GM12878 (cell line): ENCODE measurements at regions of chr1 and their contacts with region 1.

Region 1: GRCh38 chr1:157028674-157029073 is 16.9 kb downstream of the ARHGEF11 start:
- DNase-seq: no peak
- ATAC-seq: no peak
- H3K4me3 ChIP-seq: no peak overlapping the region
- H3K27ac ChIP-seq: no peak overlapping the region
- H3K4me1 ChIP-seq: no peaks in the 10 kb centered on the region
- H3K27me3 ChIP-seq: no peaks in the 10 kb centered on the region
- CTCF ChIP-seq: no peak
- EP300 ChIP-seq: no peak
- POLR2A ChIP-seq: no peak
- RAD21 ChIP-seq: no peak

Region 2: GRCh38 chr1:157040802-157041201 is 12.1 kb after region 1 on chr1:
- CTCF ChIA-PET with region 1: interaction called, 16 read pairs
- POLR2A ChIA-PET with region 1: interaction called, 3 read pairs
- RAD21 ChIA-PET with region 1: interaction called, 5 read pairs
- SMC1A ChIA-PET with region 1: interaction called, 9 read pairs
- in situ Hi-C with region 1: no loop called
- intact Hi-C with region 1: no loop called
- DNase-seq: no peak
- ATAC-seq: peak; percentile 36; the same call in 2 of the 3 replicates
- H3K4me3 ChIP-seq: no peak overlapping the region
- H3K27ac ChIP-seq: peak overlapping the region; percentile 22; the same call in 1 of the 2 replicates
- H3K4me1 ChIP-seq: no peaks in the 10 kb centered on the region
- H3K27me3 ChIP-seq: no peaks in the 10 kb centered on the region; a peak in 1 of 4 replicates
- CTCF ChIP-seq: no peak
- EP300 ChIP-seq: no peak
- POLR2A ChIP-seq: no peak
- RAD21 ChIP-seq: no peak

Region 3: GRCh38 chr1:157085421-157085820 is 56.7 kb after region 1 on chr1:
- CTCF ChIA-PET with region 1: no interaction called
- POLR2A ChIA-PET with region 1: no interaction called
- RAD21 ChIA-PET with region 1: no interaction called
- SMC1A ChIA-PET with region 1: no interaction called
- in situ Hi-C with region 1: no loop called
- intact Hi-C with region 1: no loop called
- DNase-seq: no peak
- ATAC-seq: no peak
- H3K4me3 ChIP-seq: no peak overlapping the region
- H3K27ac ChIP-seq: no peak overlapping the region
- H3K4me1 ChIP-seq: no peaks in the 10 kb centered on the region
- H3K27me3 ChIP-seq: no peaks in the 10 kb centered on the region
- CTCF ChIP-seq: no peak
- EP300 ChIP-seq: no peak
- POLR2A ChIP-seq: no peak
- RAD21 ChIP-seq: no peak